IMR-90 (cell line): ENCODE measurements at regions of chr20 and their contacts with region 1.

Region 1: DNA sequence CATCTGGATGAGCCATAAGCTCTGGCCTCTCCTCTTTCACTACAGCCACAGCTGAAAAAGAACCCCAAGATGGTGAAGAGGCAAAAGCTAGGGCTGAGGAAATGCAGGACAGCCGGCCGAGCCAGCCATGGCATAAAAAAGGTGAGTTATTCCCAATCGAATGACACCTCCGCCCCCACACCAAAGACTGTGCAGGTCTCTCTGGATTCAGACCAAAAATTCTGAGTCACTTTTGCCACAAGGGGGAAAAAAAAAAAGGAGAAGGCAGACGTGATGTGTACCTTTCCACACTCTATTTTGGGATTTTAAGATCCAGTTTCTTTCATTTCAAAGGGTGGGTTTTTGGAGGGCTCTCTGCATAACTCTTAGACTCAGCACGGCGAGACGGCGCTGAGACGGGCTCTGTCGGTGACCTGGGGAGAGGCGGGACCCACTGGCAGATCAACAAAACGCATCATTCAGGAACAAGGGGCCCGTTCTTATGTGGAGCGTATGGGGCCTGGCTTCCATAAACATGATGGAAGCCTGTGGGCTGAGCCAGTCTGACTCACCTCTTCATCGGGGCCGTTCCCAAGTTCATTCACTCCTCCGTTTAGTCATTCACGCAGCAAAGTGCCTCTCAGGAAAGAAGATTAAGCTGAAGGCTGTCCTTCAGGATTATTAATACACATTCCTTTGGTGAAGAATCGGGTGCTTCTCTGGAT is 54.8 kb downstream of the NFATC2 start:
- DNase-seq: peak; percentile 95
- ATAC-seq: peak; percentile 96
- H3K4me3 ChIP-seq: peak overlapping the region; percentile 5; the same call in 1 of the 2 replicates
- H3K27ac ChIP-seq: 0 out of 2 replicates have a peak overlapping the region, but pooled peaks have one; percentile 7
- H3K4me1 ChIP-seq: peaks cover 10% of the 10 kb centered on the region
- H3K27me3 ChIP-seq: no peaks in the 10 kb centered on the region
- CTCF ChIP-seq: no peak
- POLR2A ChIP-seq: peak; percentile 49; the same call in 1 of the 2 replicates
- RAD21 ChIP-seq: peak; percentile 32

Region 2: DNA sequence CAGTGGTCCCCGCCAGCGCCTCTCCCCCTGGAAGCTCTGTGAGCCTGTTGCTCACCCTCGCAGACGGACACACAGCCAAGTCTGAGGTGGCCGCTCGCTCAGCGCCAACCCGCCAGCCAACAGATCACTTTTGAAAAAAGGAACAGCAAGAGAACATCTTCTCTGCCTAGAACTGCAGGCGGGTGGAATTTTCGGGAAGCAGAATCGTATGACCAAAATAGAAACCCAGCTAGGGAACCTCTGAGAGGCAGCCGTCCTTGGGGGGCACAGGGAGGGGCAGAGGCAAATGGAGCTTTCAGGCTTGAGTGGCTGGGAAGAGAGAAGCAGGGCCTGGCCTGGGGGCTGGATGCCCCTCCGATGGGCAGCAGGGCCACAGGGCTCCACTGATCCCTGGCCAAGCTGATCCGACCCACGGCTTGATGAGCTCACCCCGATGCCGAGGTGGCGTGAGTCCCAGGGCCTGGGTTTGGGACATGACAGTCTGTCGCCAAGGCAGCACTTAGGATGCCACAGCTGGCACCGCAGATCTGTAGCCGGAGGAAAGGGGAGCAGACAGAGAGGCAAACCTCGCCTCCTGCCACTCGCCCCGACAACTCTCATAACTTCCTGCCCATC is 45.0 kb after region 1 on chr20:
- CTCF ChIA-PET with region 1: no interaction called
- POLR2A ChIA-PET with region 1: no interaction called
- dilution Hi-C with region 1: no loop called
- in situ Hi-C with region 1: no loop called
- intact Hi-C with region 1: loop called (anchors 2 kb)
- DNase-seq: peak; percentile 45
- ATAC-seq: no peak
- H3K4me3 ChIP-seq: no peak overlapping the region
- H3K27ac ChIP-seq: peak overlapping the region; percentile 1; the same call in 1 of the 2 replicates
- H3K4me1 ChIP-seq: peaks cover 21% of the 10 kb centered on the region
- H3K27me3 ChIP-seq: no peaks in the 10 kb centered on the region
- CTCF ChIP-seq: no peak
- POLR2A ChIP-seq: no peak
- RAD21 ChIP-seq: no peak

Region 3: DNA sequence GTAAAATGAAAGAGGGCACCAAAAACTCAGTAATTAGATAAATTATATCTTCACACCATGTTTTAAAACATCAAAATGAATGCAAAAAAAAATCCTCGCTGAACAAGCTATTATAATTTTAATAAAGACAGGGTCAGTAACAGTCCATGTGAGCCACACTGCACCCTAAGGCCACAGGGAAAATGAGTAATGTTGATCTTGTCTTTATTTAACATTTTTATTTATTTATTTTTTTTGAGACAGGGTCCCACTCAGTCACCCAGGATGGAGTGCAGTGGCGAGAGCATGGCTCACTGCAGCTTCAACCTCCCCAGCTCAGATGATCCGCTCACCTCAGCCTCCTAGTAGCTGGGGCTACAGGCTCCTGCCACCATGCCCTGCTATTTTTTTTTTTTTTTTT is 63.5 kb after region 1 on chr20:
- CTCF ChIA-PET with region 1: no interaction called
- POLR2A ChIA-PET with region 1: no interaction called
- dilution Hi-C with region 1: no loop called
- in situ Hi-C with region 1: no loop called
- intact Hi-C with region 1: loop called (anchors 2 kb)
- DNase-seq: no peak
- ATAC-seq: no peak
- H3K4me3 ChIP-seq: no peak overlapping the region
- H3K27ac ChIP-seq: no peak overlapping the region
- H3K4me1 ChIP-seq: no peaks in the 10 kb centered on the region
- H3K27me3 ChIP-seq: no peaks in the 10 kb centered on the region
- CTCF ChIP-seq: no peak
- POLR2A ChIP-seq: peak; percentile 38
- RAD21 ChIP-seq: no peak